ENCODE measurements at regions of chr5 and their contacts with region 1.

Region 1: DNA sequence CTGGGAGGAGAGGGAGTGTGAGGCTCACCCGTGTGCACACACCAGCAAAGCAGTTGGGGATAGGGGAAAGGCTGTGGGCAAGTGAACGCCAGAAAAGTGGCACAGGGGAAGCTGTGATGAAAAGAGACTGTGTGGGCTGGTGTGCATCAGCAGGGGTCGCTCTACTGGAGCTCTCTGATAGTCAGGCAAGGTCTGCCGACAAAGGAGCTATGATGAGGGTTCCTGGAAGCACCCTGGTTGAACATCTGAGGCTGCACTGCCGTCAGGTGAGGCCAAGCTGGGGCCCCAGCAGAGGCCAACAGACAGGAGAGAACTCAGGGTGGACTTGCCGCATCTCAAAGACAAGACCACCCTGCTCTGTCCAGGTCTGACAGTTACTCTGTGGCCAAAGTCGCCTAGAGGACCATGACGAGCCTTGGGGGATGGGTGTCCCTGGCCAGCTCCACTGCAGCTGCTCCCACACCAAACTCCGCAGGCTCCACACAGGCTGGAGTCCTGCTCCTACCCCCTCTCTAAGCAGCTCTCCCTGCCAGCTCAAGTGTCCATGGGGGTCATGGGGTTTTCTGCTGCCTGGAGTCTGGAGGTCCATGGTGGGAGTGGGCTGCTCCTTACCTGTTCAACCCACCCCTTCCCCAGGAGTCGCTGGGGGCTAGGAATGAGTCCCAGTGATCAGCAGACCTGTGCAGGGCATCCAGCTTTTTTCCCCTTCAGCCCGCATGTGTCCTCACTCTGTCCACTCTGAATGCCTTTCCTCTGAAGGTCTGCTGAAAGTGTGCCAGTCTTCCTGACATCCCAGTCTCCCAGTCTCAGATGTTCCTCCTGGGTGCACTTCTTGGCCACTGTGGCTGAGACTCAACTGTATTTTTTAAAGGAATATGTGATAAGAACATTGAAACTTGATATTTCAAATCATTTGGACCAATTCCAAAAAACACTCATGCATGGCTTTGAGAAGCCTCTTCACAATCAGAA is 261.1 kb upstream of the ANKH start:
- DNase-seq: no peak

Region 2: GRCh38 chr5:15044521-15044920 is 88.2 kb before region 1 on chr5:
- CTCF ChIA-PET with region 1: no interaction called
- POLR2A ChIA-PET with region 1: no interaction called
- DNase-seq: no peak

Region 3: DNA sequence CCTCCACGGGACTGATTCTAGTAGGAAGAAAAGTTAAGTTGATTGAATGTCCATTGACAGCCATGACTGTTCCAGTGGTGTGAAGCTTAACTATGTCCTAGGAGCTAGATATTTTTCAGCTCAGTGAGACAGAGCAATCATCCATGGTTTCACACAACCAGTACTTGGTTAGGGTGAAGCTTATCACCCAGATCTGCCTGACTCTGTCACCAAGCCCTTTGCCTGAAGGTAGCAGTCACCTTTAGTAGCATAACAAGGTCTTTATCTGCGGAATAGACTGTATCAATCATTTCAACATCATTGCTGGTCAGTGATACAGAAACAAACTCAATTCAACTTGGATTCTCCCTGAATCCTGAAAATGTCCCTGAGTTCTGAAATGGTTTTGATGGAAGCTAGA is 22.5 kb before region 1 on chr5:
- CTCF ChIA-PET with region 1: no interaction called
- POLR2A ChIA-PET with region 1: no interaction called
- DNase-seq: no peak

Region 4: GRCh38 chr5:15574806-15575325 is 442.1 kb after region 1 on chr5:
- CTCF ChIA-PET with region 1: interaction called, 10 read pairs
- POLR2A ChIA-PET with region 1: no interaction called
- DNase-seq: no peak